ENCODE measurements at regions of chr1 and their contacts with region 1.

Region 1: GRCh38 chr1:67355745-67356424 is 48.2 kb downstream of the IL12RB2 start:
- DNase-seq: no peak
- H3K4me3 ChIP-seq: no peak overlapping the region
- H3K27ac ChIP-seq: no peak overlapping the region
- H3K4me1 ChIP-seq: no peaks in the 10 kb centered on the region
- H3K27me3 ChIP-seq: no peaks in the 10 kb centered on the region
- CTCF ChIP-seq: no peak

Region 2: DNA sequence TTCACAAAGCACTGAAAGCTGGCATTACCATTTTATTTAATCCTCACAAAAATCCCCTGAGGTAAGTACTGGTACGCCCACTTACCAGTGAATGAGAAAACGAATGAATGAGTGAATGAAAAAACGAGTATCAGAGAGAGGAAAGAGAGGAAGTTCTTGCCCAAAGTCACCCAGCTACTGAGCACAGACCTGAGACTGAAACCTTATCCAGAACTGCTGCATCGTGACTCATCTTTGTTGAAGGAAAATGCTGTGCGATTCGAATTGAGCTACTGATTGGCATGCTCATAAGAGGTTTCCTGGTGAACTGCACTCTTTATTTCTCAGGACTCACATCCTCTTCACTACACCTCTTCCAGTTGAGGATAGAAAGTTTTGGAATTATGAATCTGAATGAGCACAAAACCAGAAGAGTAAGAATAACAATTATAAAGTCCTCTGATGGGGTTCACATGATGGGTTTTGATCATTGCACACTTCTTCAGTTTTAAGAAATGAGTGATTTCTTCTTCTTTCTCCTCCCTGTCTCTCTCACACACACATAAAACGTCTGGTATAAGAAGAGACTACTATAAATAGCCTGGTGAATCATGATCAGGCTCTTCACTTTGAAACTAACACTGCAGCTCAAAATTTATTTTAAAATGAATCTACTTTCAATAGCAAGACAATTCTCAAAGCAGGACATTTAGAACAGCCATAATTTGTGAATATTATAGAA is 16.1 kb before region 1 on chr1:
- CTCF ChIA-PET with region 1: no interaction called
- POLR2A ChIA-PET with region 1: interaction called, 10 read pairs
- intact Hi-C with region 1: no loop called
- DNase-seq: no peak
- H3K4me3 ChIP-seq: no peak overlapping the region
- H3K27ac ChIP-seq: no peak overlapping the region
- H3K4me1 ChIP-seq: no peaks in the 10 kb centered on the region
- H3K27me3 ChIP-seq: no peaks in the 10 kb centered on the region
- CTCF ChIP-seq: no peak

Measured in A673 (cell line).